ENCODE measurements at regions of chr12 and their contacts with region 1.

Region 1: GRCh38 chr12:70576346-70577282 is 60.6 kb downstream of the PTPRB start:
- DNase-seq: peak in 6 of 9 donors; percentile 24 to 54 (median 47)
- ATAC-seq: no peak
- H3K4me3 ChIP-seq: no peak overlapping the region
- H3K4me3 Mint-ChIP-seq: no peak overlapping the region
- H3K27ac ChIP-seq: no peak overlapping the region
- H3K27ac Mint-ChIP-seq: no peak overlapping the region
- H3K4me1 ChIP-seq: no peaks in the 10 kb centered on the region
- H3K4me1 Mint-ChIP-seq: no peaks in the 10 kb centered on the region
- H3K27me3 ChIP-seq: no peaks in the 10 kb centered on the region
- H3K27me3 Mint-ChIP-seq: peaks cover 0 to 18% (median 7%) of the 10 kb centered on the region in 5 donors

Region 2: GRCh38 chr12:69290545-69291277 is 1285.9 kb before region 1 on chr12:
- CTCF ChIA-PET with region 1: no interaction called
- POLR2A ChIA-PET with region 1: no interaction called
- intact Hi-C with region 1: loop called in 1 of 2 experiments (anchors 1 kb)
- DNase-seq: peak; percentile 57 to 82 (median 75)
- ATAC-seq: peak; percentile 100
- H3K4me3 ChIP-seq: no peak overlapping the region
- H3K4me3 Mint-ChIP-seq: peak overlapping the region in 2 of 10 donors; percentile 14 to 37
- H3K27ac ChIP-seq: no peak overlapping the region
- H3K27ac Mint-ChIP-seq: peak overlapping the region in 1 of 9 donors; percentile 59
- H3K4me1 ChIP-seq: peaks cover 8% of the 10 kb centered on the region in 2 donors
- H3K4me1 Mint-ChIP-seq: peaks cover 6 to 36% (median 22%) of the 10 kb centered on the region in 7 donors
- H3K27me3 ChIP-seq: no peaks in the 10 kb centered on the region
- H3K27me3 Mint-ChIP-seq: peaks cover 0 to 49% (median 18%) of the 10 kb centered on the region in 5 donors

Region 3: GRCh38 chr12:69900720-69901131 is 675.9 kb before region 1 on chr12:
- CTCF ChIA-PET with region 1: interaction called, 33 read pairs
- POLR2A ChIA-PET with region 1: no interaction called
- intact Hi-C with region 1: loop called (anchors 1 kb)
- DNase-seq: peak; percentile 23 to 67 (median 50)
- ATAC-seq: peak; percentile 56
- H3K4me3 ChIP-seq: no peak overlapping the region
- H3K4me3 Mint-ChIP-seq: no peak overlapping the region
- H3K27ac ChIP-seq: no peak overlapping the region
- H3K27ac Mint-ChIP-seq: no peak overlapping the region
- H3K4me1 ChIP-seq: no peaks in the 10 kb centered on the region
- H3K4me1 Mint-ChIP-seq: peaks cover 0 to 2% (median 0%) of the 10 kb centered on the region in 7 donors
- H3K27me3 ChIP-seq: no peaks in the 10 kb centered on the region
- H3K27me3 Mint-ChIP-seq: peaks cover 0 to 4% (median 2%) of the 10 kb centered on the region in 5 donors

Region 4: DNA sequence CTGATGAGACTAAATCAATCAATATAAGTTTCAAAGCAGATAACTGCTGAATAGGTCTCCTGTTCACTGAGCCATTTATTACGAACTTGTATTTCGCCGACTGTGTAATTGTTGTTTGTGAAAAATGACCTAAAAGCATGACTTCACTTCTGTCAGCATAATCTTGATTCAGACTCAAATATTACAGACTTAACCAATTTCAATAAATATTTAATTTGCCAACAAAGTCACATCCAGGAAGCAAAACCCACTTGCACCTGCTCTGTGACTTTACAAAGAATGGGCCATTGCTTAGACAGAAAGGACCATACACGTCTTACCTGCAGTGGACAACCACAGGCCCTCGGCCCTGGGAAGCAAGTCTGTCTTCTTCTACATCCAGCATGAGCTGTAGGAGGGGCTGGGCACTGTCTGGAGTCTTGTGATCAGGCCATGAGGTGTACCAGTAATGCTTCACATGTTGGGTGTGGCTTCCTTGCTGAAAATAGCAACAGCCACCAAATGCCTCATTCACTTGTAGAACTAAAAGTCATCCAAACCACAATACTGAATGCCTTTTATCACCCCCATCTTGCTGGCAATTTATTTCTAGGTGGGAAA is 84.1 kb after region 1 on chr12:
- CTCF ChIA-PET with region 1: no interaction called
- POLR2A ChIA-PET with region 1: no interaction called
- intact Hi-C with region 1: no loop called
- DNase-seq: no peak
- ATAC-seq: peak; percentile 53
- H3K4me3 ChIP-seq: no peak overlapping the region
- H3K4me3 Mint-ChIP-seq: no peak overlapping the region
- H3K27ac ChIP-seq: no peak overlapping the region
- H3K27ac Mint-ChIP-seq: no peak overlapping the region
- H3K4me1 ChIP-seq: no peaks in the 10 kb centered on the region
- H3K4me1 Mint-ChIP-seq: peaks cover 0 to 3% (median 0%) of the 10 kb centered on the region in 7 donors
- H3K27me3 ChIP-seq: no peaks in the 10 kb centered on the region
- H3K27me3 Mint-ChIP-seq: peaks cover 0 to 5% (median 0%) of the 10 kb centered on the region in 5 donors

Region 5: GRCh38 chr12:70733385-70733784 is 156.8 kb after region 1 on chr12:
- CTCF ChIA-PET with region 1: no interaction called
- POLR2A ChIA-PET with region 1: no interaction called
- intact Hi-C with region 1: loop called in 1 of 2 experiments (anchors 2 kb)
- DNase-seq: peak in 2 of 9 donors; percentile 8 to 30
- ATAC-seq: peak; percentile 57
- H3K4me3 ChIP-seq: no peak overlapping the region
- H3K4me3 Mint-ChIP-seq: no peak overlapping the region
- H3K27ac ChIP-seq: no peak overlapping the region
- H3K27ac Mint-ChIP-seq: no peak overlapping the region
- H3K4me1 ChIP-seq: no peaks in the 10 kb centered on the region
- H3K4me1 Mint-ChIP-seq: peaks cover 0 to 2% (median 0%) of the 10 kb centered on the region in 7 donors
- H3K27me3 ChIP-seq: no peaks in the 10 kb centered on the region
- H3K27me3 Mint-ChIP-seq: peaks cover 0 to 23% (median 6%) of the 10 kb centered on the region in 5 donors

Region 6: GRCh38 chr12:70812151-70812550 is 235.5 kb after region 1 on chr12:
- CTCF ChIA-PET with region 1: no interaction called
- POLR2A ChIA-PET with region 1: no interaction called
- intact Hi-C with region 1: no loop called
- DNase-seq: no peak
- ATAC-seq: no peak
- H3K4me3 ChIP-seq: no peak overlapping the region
- H3K4me3 Mint-ChIP-seq: no peak overlapping the region
- H3K27ac ChIP-seq: no peak overlapping the region
- H3K27ac Mint-ChIP-seq: no peak overlapping the region
- H3K4me1 ChIP-seq: no peaks in the 10 kb centered on the region
- H3K4me1 Mint-ChIP-seq: no peaks in the 10 kb centered on the region
- H3K27me3 ChIP-seq: no peaks in the 10 kb centered on the region
- H3K27me3 Mint-ChIP-seq: peaks cover 0 to 6% (median 3%) of the 10 kb centered on the region in 5 donors